B cell (primary cell): ENCODE measurements at regions of chr14 and their contacts with region 1.

Region 1: DNA sequence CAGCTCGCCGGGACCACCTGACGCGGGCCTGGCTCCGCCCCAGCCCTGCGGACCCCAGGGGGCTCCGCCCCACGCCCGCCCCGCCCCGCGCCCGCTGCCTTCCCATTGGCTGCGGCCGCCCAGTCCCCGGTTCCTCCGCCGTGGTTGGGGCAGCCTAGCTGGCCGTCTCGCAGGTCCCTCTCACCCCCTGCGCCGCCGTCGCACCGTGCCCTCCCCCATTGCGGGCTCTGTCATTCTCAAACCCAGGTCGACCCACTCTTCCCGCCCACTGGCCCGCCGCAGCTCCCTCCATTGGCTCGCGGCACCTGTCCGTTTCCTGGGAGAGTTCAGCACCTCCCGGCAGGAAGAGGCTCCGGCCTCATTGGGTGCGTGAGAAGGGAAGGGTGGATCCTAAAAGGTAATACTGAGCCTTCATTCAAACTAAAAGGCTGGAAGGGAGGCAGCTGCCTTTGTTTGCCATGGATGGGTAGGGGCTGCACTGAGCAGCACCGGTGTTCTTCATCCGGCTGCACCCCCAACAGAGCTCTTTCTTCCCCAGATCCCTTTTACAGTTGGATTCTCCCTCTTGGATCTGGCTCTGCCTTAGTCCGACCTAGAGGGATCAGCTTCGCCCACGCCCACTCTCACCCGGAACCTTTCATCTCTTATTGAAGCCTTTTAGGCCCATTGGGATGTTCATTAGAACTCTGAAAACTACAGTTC is 381 bp upstream of the MAP3K9 start:
- DNase-seq: peak; percentile 93
- ATAC-seq: peak; percentile 86
- H3K4me3 ChIP-seq: peak overlapping the region; percentile 48 to 85 (median 74)
- H3K4me3 Mint-ChIP-seq: no peak overlapping the region
- H3K27ac ChIP-seq: peak overlapping the region; percentile 22 to 65
- H3K27ac Mint-ChIP-seq: peak overlapping the region; percentile 87
- H3K4me1 ChIP-seq: peaks cover 16 to 24% of the 10 kb centered on the region in 2 donors
- H3K4me1 Mint-ChIP-seq: peaks cover 14% of the 10 kb centered on the region
- H3K27me3 ChIP-seq: no peaks in the 10 kb centered on the region
- H3K27me3 Mint-ChIP-seq: no peaks in the 10 kb centered on the region
- CTCF ChIP-seq: no peak

Region 2: GRCh38 chr14:70600382-70601157 is 209.1 kb before region 1 on chr14 and contains the start of gene MED6:
- CTCF ChIA-PET with region 1: interaction called, 8 read pairs
- POLR2A ChIA-PET with region 1: interaction called, 7 read pairs
- intact Hi-C with region 1: loop called (anchors 1 kb)
- DNase-seq: peak; percentile 93
- ATAC-seq: peak; percentile 98
- H3K4me3 ChIP-seq: peak within 1 kb of the TSS; percentile 67 to 100 (median 98)
- H3K4me3 Mint-ChIP-seq: peak within 1 kb of the TSS; percentile 99
- H3K27ac ChIP-seq: peak within 1 kb of the TSS; percentile 69 to 94
- H3K27ac Mint-ChIP-seq: peak within 1 kb of the TSS; percentile 97
- H3K4me1 ChIP-seq: peaks cover 25 to 26% of the 10 kb centered on the region in 2 donors
- H3K4me1 Mint-ChIP-seq: peaks cover 27% of the 10 kb centered on the region
- H3K27me3 ChIP-seq: no peaks in the 10 kb centered on the region
- H3K27me3 Mint-ChIP-seq: no peaks in the 10 kb centered on the region
- CTCF ChIP-seq: no peak
- total RNA-seq, gene MED6: 68.3 and 71.0 TPM in 2 replicates

Region 3: DNA sequence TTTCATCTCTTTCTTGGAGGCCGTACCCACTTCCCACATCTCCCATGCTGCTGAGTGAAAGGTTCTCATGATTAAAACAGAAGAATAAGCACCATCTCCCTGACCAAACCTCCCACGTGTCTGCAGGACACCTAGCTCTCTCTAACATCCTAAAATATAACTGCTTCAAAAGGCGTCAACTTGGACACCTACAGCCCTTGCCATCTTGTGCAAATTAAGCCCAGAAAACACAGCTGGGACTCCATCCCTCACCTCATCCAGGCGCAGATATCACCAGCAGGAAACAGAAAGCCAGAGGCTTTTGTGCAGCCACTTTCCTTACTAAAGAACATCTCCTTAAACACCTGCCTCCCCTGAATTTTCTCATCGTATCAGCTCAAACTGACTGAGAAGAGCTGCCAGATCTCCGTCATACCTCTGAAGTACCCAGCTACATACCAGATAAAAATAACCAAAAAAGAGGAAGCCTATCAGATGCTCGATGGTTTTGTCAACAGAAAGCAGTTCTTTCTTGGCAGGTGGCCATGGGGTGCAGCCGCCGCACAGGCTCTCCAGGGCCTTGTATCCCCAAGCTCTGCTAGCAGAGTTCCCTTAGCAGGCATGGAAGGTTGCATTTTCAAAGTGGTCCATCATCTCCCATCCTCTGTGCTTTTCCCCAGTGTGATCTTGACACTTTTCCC is 29.2 kb before region 1 on chr14:
- CTCF ChIA-PET with region 1: interaction called, 22 read pairs
- POLR2A ChIA-PET with region 1: interaction called, 17 read pairs
- intact Hi-C with region 1: no loop called
- DNase-seq: peak; percentile 84
- ATAC-seq: peak; percentile 95
- H3K4me3 ChIP-seq: peak overlapping the region in 3 of 5 experiments; percentile 12 to 33 (median 17)
- H3K4me3 Mint-ChIP-seq: peak overlapping the region; percentile 69
- H3K27ac ChIP-seq: peak overlapping the region; percentile 85 to 91
- H3K27ac Mint-ChIP-seq: peak overlapping the region; percentile 94
- H3K4me1 ChIP-seq: peaks cover 40 to 47% of the 10 kb centered on the region in 2 donors
- H3K4me1 Mint-ChIP-seq: peaks cover 60% of the 10 kb centered on the region
- H3K27me3 ChIP-seq: no peaks in the 10 kb centered on the region
- H3K27me3 Mint-ChIP-seq: no peaks in the 10 kb centered on the region
- CTCF ChIP-seq: no peak

Region 4: GRCh38 chr14:70791971-70792370 is 17.7 kb before region 1 on chr14:
- CTCF ChIA-PET with region 1: no interaction called
- POLR2A ChIA-PET with region 1: no interaction called
- intact Hi-C with region 1: no loop called
- DNase-seq: no peak
- ATAC-seq: no peak
- H3K4me3 ChIP-seq: no peak overlapping the region
- H3K4me3 Mint-ChIP-seq: no peak overlapping the region
- H3K27ac ChIP-seq: no peak overlapping the region
- H3K27ac Mint-ChIP-seq: no peak overlapping the region
- H3K4me1 ChIP-seq: no peaks in the 10 kb centered on the region
- H3K4me1 Mint-ChIP-seq: peaks cover 5% of the 10 kb centered on the region
- H3K27me3 ChIP-seq: no peaks in the 10 kb centered on the region
- H3K27me3 Mint-ChIP-seq: no peaks in the 10 kb centered on the region
- CTCF ChIP-seq: no peak

Region 5: DNA sequence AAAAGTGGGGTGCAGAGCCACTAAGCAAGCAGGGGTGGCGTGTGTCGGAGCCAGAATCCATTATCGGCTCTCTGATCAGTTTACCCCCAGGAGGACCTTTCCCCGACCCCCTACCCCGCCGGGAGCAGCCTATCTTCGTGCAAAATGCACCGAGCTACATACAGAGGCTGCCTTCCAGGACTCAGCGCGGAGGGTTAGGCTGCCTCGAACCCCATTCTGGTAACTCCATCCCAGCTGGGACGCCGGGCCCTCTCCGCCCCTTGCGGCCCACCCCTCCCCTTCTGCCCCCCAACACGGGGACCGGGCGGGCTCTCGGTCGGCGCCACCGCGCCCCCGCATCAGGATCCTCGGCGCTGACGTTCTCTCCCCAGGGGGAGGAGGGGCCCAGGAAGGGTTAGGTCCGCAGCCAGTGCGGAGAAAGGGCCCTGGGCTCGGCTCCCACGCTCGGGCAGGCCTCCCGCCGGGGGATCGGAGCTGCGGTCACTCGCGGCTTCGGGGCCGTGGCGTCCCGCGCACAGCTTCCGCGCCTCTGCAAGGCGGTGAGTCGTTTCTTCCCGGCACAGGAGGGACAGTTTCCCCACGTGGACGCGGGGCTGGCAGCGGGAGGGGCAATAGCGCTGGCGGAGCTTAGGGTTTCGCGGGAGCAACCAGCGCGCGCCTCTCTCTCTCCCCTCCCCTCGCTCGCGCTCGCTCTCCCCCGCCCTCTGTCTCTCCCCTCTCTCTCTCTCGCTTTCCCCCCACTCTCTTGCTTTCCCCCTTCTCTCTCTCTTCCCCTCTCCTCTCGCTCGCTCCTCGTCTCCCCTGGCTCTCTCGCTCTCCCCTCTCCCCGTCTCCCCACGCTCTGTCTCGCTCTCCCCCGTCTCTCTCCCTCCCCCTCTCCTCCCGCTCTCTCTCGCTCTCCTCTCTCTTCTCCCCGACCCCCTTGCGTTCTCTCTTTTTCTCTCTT is 12.2 kb after region 1 on chr14:
- CTCF ChIA-PET with region 1: interaction called, 42 read pairs
- POLR2A ChIA-PET with region 1: interaction called, 5 read pairs
- intact Hi-C with region 1: loop called (anchors 1 kb)
- DNase-seq: peak; percentile 58
- ATAC-seq: peak; percentile 7
- H3K4me3 ChIP-seq: peak overlapping the region; percentile 52 to 72 (median 61)
- H3K4me3 Mint-ChIP-seq: peak overlapping the region; percentile 79
- H3K27ac ChIP-seq: peak overlapping the region in 1 of 2 donors; percentile 19
- H3K27ac Mint-ChIP-seq: no peak overlapping the region
- H3K4me1 ChIP-seq: peaks cover 22 to 26% of the 10 kb centered on the region in 2 donors
- H3K4me1 Mint-ChIP-seq: peaks cover 18% of the 10 kb centered on the region
- H3K27me3 ChIP-seq: peaks cover 0 to 49% (median 30%) of the 10 kb centered on the region in 4 experiments
- H3K27me3 Mint-ChIP-seq: peaks cover 42% of the 10 kb centered on the region
- CTCF ChIP-seq: no peak